Calu3 (cell line): ENCODE measurements at regions of chr13 and their contacts with region 1.

Region 1: GRCh38 chr13:75219479-75220237 is 262.3 kb downstream of the TBC1D4 start:
- DNase-seq: peak; percentile 69
- H3K4me3 Mint-ChIP-seq: no peak overlapping the region
- H3K27ac Mint-ChIP-seq: no peak overlapping the region
- H3K4me1 Mint-ChIP-seq: no peaks in the 10 kb centered on the region
- H3K27me3 Mint-ChIP-seq: no peaks in the 10 kb centered on the region
- CTCF ChIP-seq: peak; percentile 46

Region 2: GRCh38 chr13:74575729-74576125 is 643.9 kb before region 1 on chr13:
- CTCF ChIA-PET with region 1: no interaction called
- intact Hi-C with region 1: loop called (anchors 10 kb)
- DNase-seq: no peak
- H3K4me3 Mint-ChIP-seq: peak overlapping the region; percentile 26
- H3K27ac Mint-ChIP-seq: no peak overlapping the region
- H3K4me1 Mint-ChIP-seq: no peaks in the 10 kb centered on the region
- H3K27me3 Mint-ChIP-seq: no peaks in the 10 kb centered on the region
- CTCF ChIP-seq: no peak